Activated T-helper 1 cell treated with anti-CD3 and anti-CD28 coated beads, Interleukin-12 subunit alpha, Interleukin-12 subunit beta, Interleukin-2, Interleukin-4 antibody, amounts not matched to agents 30 ng/mL and 10 ng/mL and 1 ng/mL, durations not matched to agents 14 hours and 24 hours and 36 hours (primary cell): ENCODE measurements at regions of chr9 and their contacts with region 1.

Region 1: DNA sequence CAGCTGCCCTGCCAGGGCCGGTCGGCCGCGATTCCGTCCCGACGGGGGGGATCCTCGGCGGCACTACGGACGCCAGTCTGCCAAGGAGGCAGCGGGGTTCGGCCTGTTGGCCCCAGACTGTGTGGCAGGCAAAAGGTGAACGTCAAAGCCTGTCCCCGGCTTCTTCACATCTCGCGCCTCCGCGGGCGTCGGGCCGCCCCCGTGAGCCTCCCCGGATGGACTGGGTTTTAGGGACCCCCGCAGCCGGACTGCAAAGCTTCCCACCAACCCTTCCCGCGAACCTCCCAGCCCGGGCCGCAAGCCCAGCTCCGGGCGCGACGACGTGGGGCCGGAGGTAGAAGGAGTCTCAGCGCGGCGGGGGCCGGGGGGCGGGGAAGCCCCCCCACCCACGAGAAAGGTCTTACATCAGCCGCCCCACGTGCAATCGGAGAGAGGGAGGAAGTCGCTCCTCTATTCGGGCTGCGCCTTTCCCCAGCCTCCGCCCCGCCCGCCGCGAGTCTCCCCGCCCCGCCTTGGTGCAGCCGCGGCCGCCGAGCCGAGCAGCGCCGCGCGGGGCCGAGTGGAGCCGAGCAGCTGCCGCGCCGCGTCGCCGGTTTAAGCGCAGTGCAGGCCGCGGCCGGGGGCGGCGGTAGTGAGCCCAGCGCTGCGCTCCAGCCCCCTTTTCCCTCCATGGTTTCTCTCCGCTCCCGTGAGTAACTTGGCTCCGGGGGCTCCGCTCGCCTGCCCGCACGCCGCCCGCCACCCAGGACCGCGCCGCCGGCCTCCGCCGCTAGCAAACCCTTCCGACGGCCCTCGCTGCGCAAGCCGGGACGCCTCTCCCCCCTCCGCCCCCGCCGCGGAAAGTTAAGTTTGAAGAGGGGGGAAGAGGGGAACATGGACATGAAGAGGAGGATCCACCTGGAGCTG is at the start of gene ANP32B:
- DNase-seq: peak; percentile 93
- H3K4me3 Mint-ChIP-seq: peak within 1 kb of the TSS; percentile 80
- H3K27ac Mint-ChIP-seq: peak within 1 kb of the TSS; percentile 78
- H3K4me1 Mint-ChIP-seq: peaks cover 46% of the 10 kb centered on the region
- H3K27me3 Mint-ChIP-seq: no peaks in the 10 kb centered on the region
- total RNA-seq, gene ANP32B: 305 and 313 TPM in 2 replicates

Region 2: DNA sequence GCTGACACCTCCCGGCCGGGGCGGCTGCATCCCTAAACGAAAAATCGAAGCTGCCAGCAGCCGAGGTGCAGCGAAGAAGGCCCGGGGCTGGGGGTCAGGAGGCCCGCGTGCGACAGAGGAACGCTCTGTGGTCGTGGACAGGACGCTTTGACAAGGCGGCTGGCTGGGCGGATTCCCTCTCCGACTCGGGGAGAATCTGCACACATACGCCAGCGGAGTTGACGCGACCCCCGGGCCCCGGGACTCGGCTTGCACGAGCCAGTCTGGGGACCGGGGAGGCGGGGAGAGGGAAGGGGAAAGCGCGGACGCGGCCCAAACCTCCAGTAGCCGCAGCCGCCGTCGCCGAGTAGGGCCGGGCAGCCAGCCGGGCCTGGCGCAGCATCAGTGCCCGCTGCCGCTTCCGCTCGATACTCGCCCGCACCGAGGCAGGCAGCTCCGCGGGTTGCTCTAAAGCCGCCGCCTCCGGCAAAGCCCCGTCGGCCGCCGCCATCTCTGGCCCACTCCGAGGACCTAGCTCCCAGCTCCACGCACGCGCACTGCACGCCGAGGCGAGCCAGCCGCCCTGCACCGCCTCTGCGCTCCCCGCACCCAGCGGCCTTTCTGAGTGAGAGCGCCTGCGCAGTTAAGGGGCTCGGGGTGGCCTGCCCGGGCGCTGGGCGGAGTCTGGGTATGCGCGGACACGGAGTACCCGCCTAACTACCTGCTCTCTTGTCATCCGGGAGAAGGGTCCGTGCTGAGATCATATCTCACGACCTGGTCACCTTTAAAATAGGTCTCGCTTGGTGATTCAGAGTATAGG is 285.9 kb before region 1 on chr9 and contains the start of gene XPA:
- intact Hi-C with region 1: loop called (anchors 5 kb)
- DNase-seq: peak; percentile 98
- H3K4me3 Mint-ChIP-seq: peak within 1 kb of the TSS; percentile 85
- H3K27ac Mint-ChIP-seq: peak within 1 kb of the TSS; percentile 84
- H3K4me1 Mint-ChIP-seq: peaks cover 54% of the 10 kb centered on the region
- H3K27me3 Mint-ChIP-seq: no peaks in the 10 kb centered on the region
- total RNA-seq, gene XPA: 10.6 and 11.3 TPM in 2 replicates

Region 3: DNA sequence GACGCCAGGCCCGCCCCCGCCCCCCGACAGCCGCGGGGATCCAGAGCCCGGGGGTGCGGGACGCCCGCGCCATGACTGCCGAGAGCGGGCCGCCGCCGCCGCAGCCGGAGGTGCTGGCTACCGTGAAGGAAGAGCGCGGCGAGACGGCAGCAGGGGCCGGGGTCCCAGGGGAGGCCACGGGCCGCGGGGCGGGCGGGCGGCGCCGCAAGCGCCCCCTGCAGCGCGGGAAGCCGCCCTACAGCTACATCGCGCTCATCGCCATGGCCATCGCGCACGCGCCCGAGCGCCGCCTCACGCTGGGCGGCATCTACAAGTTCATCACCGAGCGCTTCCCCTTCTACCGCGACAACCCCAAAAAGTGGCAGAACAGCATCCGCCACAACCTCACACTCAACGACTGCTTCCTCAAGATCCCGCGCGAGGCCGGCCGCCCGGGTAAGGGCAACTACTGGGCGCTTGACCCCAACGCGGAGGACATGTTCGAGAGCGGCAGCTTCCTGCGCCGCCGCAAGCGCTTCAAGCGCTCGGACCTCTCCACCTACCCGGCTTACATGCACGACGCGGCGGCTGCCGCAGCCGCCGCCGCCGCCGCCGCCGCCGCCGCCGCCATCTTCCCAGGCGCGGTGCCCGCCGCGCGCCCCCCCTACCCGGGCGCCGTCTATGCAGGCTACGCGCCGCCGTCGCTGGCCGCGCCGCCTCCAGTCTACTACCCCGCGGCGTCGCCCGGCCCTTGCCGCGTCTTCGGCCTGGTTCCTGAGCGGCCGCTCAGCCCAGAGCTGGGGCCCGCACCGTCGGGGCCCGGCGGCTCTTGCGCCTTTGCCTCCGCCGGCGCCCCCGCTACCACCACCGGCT is 128.9 kb before region 1 on chr9:
- intact Hi-C with region 1: no loop called
- DNase-seq: peak; percentile 48
- H3K4me3 Mint-ChIP-seq: peak overlapping the region; percentile 74
- H3K27ac Mint-ChIP-seq: peak overlapping the region; percentile 42
- H3K4me1 Mint-ChIP-seq: peaks cover 18% of the 10 kb centered on the region
- H3K27me3 Mint-ChIP-seq: peaks cover 80% of the 10 kb centered on the region

Region 4: GRCh38 chr9:98034593-98035546 is 51.9 kb after region 1 on chr9:
- intact Hi-C with region 1: loop called (anchors 1 kb)
- DNase-seq: peak; percentile 80
- H3K4me3 Mint-ChIP-seq: no peak overlapping the region
- H3K27ac Mint-ChIP-seq: peak overlapping the region; percentile 50
- H3K4me1 Mint-ChIP-seq: peaks cover 10% of the 10 kb centered on the region
- H3K27me3 Mint-ChIP-seq: peaks cover 2% of the 10 kb centered on the region

Region 5: DNA sequence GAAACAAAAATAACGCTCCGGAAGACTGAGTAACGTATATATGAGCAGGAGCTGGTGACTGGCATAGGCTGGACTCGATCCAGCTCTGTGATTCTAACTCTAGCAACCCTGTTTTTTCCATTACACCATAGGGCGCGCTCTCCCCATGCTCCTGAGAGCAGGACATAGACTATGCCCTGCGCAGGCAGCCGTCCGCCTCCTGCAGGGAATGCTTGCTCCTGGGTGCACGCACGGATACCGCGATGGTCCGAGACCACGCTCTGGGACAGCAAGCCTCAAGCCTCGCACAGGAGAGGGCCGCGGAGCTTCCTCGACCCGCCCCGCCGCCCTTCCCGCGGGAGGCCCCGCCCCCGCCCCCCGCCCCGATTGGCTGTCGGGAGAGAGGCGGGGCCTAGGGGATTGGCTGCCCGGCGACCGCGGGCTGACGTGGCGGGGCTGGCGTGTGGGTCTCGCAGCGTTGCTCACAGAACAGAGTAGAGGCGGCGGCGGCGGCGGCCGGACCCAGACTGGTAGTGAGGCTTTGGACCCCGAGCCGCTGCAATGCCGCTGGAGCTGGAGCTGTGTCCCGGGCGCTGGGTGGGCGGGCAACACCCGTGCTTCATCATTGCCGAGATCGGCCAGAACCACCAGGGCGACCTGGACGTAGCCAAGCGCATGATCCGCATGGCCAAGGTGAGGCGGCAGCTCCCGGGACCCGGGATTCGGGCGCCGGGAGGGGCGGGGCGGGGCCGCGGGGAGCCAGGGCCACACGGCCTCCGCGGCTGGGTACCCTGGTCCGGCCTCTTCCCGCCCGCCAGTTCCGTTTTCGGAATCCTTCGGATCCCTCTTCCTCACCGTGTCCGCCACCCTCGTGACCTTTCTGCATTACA is 73.6 kb after region 1 on chr9 and contains the start of gene NANS:
- intact Hi-C with region 1: loop called (anchors 1 kb)
- DNase-seq: peak; percentile 90
- H3K4me3 Mint-ChIP-seq: peak within 1 kb of the TSS; percentile 98
- H3K27ac Mint-ChIP-seq: peak within 1 kb of the TSS; percentile 97
- H3K4me1 Mint-ChIP-seq: peaks cover 33% of the 10 kb centered on the region
- H3K27me3 Mint-ChIP-seq: no peaks in the 10 kb centered on the region
- total RNA-seq, gene NANS: 54.4 and 55.5 TPM in 2 replicates

Region 6: DNA sequence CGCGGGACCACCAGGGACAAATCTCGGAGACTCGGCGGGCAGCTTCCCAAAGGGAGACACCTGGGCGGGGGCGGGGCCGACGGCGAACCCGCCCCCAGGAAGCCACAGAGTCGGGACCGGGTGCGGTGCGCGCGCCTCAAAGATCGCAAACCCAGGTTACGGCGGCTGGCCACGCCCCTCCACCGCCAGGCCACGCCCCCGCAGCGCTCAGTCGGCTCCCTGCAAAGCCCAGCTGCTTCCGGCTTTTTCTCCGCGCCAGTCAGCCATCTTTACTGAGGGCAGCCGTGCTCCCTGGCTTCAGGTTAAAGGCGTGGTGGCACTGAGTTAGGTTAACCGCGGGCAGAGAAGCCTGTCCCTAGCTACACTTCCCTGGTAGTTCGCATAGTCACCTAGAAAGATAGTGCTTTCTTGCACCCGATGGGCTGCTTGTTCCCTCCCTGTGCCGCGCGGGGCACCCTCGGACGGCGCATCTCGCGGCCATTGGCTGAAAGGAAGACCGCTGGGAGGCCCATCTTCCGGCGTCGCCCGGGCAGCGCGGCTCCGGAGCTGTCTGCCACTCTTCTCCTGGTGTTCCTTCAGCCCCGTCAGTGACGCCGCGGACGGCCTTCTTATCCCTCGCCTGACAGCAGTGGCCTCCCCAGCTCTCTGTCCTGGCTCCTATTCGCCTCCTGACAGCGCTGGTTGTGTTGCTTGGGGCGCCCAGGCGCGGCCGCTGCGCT is 272.8 kb after region 1 on chr9 and contains the start of gene TBC1D2:
- intact Hi-C with region 1: loop called (anchors 2 kb)
- DNase-seq: peak; percentile 96
- H3K4me3 Mint-ChIP-seq: peak within 1 kb of the TSS; percentile 89
- H3K27ac Mint-ChIP-seq: peak within 1 kb of the TSS; percentile 94
- H3K4me1 Mint-ChIP-seq: peaks cover 27% of the 10 kb centered on the region
- H3K27me3 Mint-ChIP-seq: peaks cover 3% of the 10 kb centered on the region
- total RNA-seq, gene TBC1D2: 1.8 and 2.2 TPM in 2 replicates